HCT116 (cell line): ENCODE measurements at regions of chr2 and their contacts with region 1.

Region 1: GRCh38 chr2:216666461-216667233 is 28.7 kb downstream of the IGFBP5 start:
- DNase-seq: peak; percentile 55
- ATAC-seq: peak; percentile 92
- H3K4me3 ChIP-seq: no peak overlapping the region
- H3K27ac ChIP-seq: no peak overlapping the region
- H3K4me1 ChIP-seq: no peaks in the 10 kb centered on the region
- H3K27me3 ChIP-seq: no peaks in the 10 kb centered on the region
- CTCF ChIP-seq: peak; percentile 92 to 99 (median 98)
- POLR2A ChIP-seq: no peak
- RAD21 ChIP-seq: peak; percentile 98

Region 2: GRCh38 chr2:216034065-216034464 is 632.6 kb before region 1 on chr2:
- CTCF ChIA-PET with region 1: interaction called, 3 read pairs
- POLR2A ChIA-PET with region 1: no interaction called
- RAD21 ChIA-PET with region 1: no interaction called
- intact Hi-C with region 1: loop called (anchors 10 kb)
- DNase-seq: peak; percentile 54
- ATAC-seq: peak; percentile 92
- H3K4me3 ChIP-seq: no peak overlapping the region
- H3K27ac ChIP-seq: no peak overlapping the region
- H3K4me1 ChIP-seq: no peaks in the 10 kb centered on the region
- H3K27me3 ChIP-seq: no peaks in the 10 kb centered on the region
- CTCF ChIP-seq: peak; percentile 47 to 94 (median 91); a peak in 5 of 6 replicates
- POLR2A ChIP-seq: no peak
- RAD21 ChIP-seq: peak; percentile 57

Region 3: DNA sequence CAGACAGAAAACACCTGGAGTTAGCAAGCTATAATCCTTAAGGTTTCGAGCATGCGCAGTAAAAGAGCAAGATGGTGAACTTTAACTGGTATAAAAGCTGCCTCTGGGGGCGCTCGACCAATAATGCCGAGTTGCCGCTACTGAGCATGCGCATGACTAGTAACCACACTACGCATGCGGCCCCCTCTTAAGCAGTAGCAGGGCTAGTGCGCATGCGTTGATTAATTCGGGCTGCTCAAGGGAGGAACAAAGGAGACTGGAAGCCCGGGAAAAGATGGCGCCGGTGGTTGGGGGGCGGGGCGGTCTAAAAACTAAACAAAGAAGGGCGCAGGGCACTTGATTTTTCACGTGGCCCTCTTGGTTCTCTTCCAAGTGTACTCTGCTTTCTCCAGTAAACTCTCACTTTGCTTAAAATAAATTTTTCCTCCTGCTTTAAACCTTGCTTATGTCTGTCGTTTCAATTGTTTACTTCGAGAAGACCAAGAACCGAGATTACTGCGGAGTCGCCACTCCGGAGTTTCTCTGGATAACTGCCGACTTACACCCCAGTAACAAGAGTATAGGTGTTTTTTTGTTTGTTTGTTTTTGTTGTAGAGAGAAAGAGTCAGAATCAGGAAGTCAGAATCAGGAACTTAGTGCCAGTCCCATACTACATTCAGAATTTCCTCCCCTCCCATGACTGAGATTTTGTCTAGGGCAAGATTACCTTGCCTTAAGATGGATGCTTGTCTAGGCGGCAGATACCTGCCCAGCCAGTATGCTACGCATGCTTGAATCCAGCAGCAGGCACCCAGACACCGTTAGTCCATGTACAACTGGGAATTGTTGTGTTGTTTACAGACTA is 551.7 kb before region 1 on chr2:
- CTCF ChIA-PET with region 1: no interaction called
- POLR2A ChIA-PET with region 1: no interaction called
- RAD21 ChIA-PET with region 1: no interaction called
- intact Hi-C with region 1: loop called (anchors 1 kb)
- DNase-seq: peak; percentile 98
- ATAC-seq: peak; percentile 91
- H3K4me3 ChIP-seq: peak overlapping the region; percentile 44 to 56
- H3K27ac ChIP-seq: peak overlapping the region; percentile 23
- H3K4me1 ChIP-seq: peaks cover 7 to 22% of the 10 kb centered on the region in 2 experiments; a peak in 3 of 4 replicates
- H3K27me3 ChIP-seq: no peaks in the 10 kb centered on the region
- CTCF ChIP-seq: peak; percentile 50 to 89 (median 78); a peak in 5 of 6 replicates
- POLR2A ChIP-seq: no peak
- RAD21 ChIP-seq: no peak

Region 4: DNA sequence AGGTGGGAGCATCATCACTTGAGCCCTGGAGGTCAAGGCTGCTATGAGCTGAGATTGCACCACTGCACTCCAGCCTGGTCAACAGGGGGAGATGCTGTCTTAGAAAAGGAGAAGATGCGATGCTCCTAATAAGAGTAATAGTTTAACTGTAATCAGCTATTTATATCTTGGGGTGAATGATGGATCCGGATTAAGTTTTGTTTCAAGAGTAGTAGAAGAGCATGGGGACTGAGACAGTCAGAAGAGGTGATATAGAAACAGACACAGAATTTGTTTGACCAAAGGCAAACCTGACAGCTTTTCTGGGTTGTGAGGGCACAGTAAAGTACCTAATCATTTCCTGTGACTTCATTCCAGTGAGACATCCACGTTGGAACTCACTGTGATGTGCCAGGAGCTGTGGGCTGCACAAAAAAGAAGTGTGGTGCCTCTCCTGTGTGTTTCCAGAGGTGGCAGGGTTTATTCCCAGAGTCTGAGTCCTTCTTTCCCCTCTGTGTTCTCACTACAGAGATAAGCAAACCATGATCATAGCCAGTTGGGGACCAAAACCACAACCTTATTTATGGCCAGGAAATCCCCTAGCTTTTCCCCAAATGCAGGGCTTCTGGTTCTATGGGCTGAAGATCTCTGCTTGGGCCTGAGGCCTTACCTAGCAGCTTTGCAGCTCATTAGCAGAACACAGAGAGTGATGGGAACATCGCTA is 443.8 kb before region 1 on chr2:
- CTCF ChIA-PET with region 1: interaction called, 4 read pairs
- POLR2A ChIA-PET with region 1: no interaction called
- RAD21 ChIA-PET with region 1: no interaction called
- intact Hi-C with region 1: loop called (anchors 2 kb)
- DNase-seq: no peak
- ATAC-seq: peak; percentile 57
- H3K4me3 ChIP-seq: no peak overlapping the region
- H3K27ac ChIP-seq: no peak overlapping the region
- H3K4me1 ChIP-seq: peaks cover 0 to 22% of the 10 kb centered on the region in 2 experiments; a peak in 2 of 4 replicates
- H3K27me3 ChIP-seq: no peaks in the 10 kb centered on the region
- CTCF ChIP-seq: peak; percentile 37 to 53 (median 43); a peak in 4 of 6 replicates
- POLR2A ChIP-seq: no peak
- RAD21 ChIP-seq: peak; percentile 76

Region 5: GRCh38 chr2:216519154-216519762 is 147.4 kb before region 1 on chr2:
- CTCF ChIA-PET with region 1: interaction called, 142 read pairs
- POLR2A ChIA-PET with region 1: interaction called, 4 read pairs
- RAD21 ChIA-PET with region 1: interaction called, 8 to 10 read pairs
- intact Hi-C with region 1: loop called (anchors 1 kb)
- DNase-seq: peak; percentile 67
- ATAC-seq: peak; percentile 88
- H3K4me3 ChIP-seq: no peak overlapping the region
- H3K27ac ChIP-seq: no peak overlapping the region
- H3K4me1 ChIP-seq: no peaks in the 10 kb centered on the region
- H3K27me3 ChIP-seq: no peaks in the 10 kb centered on the region
- CTCF ChIP-seq: peak; percentile 67 to 80 (median 76); a peak in 5 of 6 replicates
- POLR2A ChIP-seq: no peak
- RAD21 ChIP-seq: peak; percentile 80

Region 6: GRCh38 chr2:216583147-216583546 is 83.5 kb before region 1 on chr2:
- CTCF ChIA-PET with region 1: no interaction called
- POLR2A ChIA-PET with region 1: no interaction called
- RAD21 ChIA-PET with region 1: no interaction called
- intact Hi-C with region 1: no loop called
- DNase-seq: no peak
- ATAC-seq: no peak
- H3K4me3 ChIP-seq: no peak overlapping the region
- H3K27ac ChIP-seq: no peak overlapping the region
- H3K4me1 ChIP-seq: peaks cover 0 to 14% of the 10 kb centered on the region in 2 experiments; a peak in 1 of 4 replicates
- H3K27me3 ChIP-seq: peaks cover 10% of the 10 kb centered on the region; the same call in 1 of the 2 replicates
- CTCF ChIP-seq: no peak
- POLR2A ChIP-seq: no peak
- RAD21 ChIP-seq: no peak